H1 (cell line): ENCODE measurements at regions of chr5 and their contacts with region 1.

Region 1: GRCh38 chr5:181173420-181174342 is 26.3 kb downstream of the OR2V2 start:
- DNase-seq: peak; percentile 94 to 98
- H3K4me3 ChIP-seq: peak overlapping the region; percentile 62 to 72 (median 66)
- H3K27ac ChIP-seq: no peak overlapping the region
- H3K4me1 ChIP-seq: no peaks in the 10 kb centered on the region; a peak in 1 of 7 replicates
- H3K27me3 ChIP-seq: peaks cover 6 to 35% (median 25%) of the 10 kb centered on the region in 4 experiments; a peak in 6 of 7 replicates
- CTCF ChIP-seq: peak in 2 of 3 experiments; percentile 2 to 17; a peak in 1 of 4 replicates
- EP300 ChIP-seq: no peak
- POLR2A ChIP-seq: no peak
- RAD21 ChIP-seq: no peak

Region 2: GRCh38 chr5:181127907-181128626 is 45.6 kb before region 1 on chr5:
- CTCF ChIA-PET with region 1: no interaction called
- POLR2A ChIA-PET with region 1: no interaction called
- DNase-seq: no peak
- H3K4me3 ChIP-seq: no peak overlapping the region
- H3K27ac ChIP-seq: no peak overlapping the region
- H3K4me1 ChIP-seq: no peaks in the 10 kb centered on the region; a peak in 1 of 7 replicates
- H3K27me3 ChIP-seq: 0 out of 7 replicates have a peak, but pooled peaks cover 0 to 3% (median 0%) of the 10 kb centered on the region in 4 experiments
- CTCF ChIP-seq: no peak
- EP300 ChIP-seq: no peak
- POLR2A ChIP-seq: no peak
- RAD21 ChIP-seq: no peak

Region 3: DNA sequence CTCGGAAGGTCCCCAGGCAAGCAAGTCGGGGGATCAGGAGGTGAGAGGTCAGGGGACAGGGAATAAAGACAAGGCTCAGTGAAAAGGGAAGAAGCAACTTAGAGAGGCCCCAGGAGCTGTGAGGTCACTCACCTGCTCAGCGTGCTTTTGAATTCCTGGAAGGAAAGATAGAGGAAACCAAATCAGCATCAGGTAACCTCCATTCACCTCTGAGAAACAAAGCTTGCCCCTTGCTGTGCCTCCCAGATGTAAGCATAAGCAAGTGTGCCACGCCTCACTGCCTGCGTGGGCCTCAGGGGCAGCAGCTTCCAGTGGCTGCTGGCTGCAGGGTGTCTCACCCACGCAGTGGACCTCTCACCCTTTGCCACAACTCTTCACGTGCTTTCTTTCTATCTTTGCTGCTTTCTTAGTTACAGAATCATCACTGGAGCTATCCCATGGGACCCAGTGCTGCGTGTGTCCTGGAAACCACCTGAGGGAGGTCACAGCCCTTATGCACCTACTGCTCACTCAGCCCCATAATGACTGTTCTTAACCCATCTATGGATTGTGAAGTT is 25.4 kb after region 1 on chr5:
- CTCF ChIA-PET with region 1: interaction called, 17 read pairs
- POLR2A ChIA-PET with region 1: interaction called, 5 read pairs
- DNase-seq: no peak
- H3K4me3 ChIP-seq: peak overlapping the region in 1 of 4 experiments; percentile 22; a peak in 2 of 8 replicates
- H3K27ac ChIP-seq: no peak overlapping the region
- H3K4me1 ChIP-seq: peaks cover 9 to 36% (median 20%) of the 10 kb centered on the region in 4 experiments
- H3K27me3 ChIP-seq: peaks cover 11 to 60% (median 37%) of the 10 kb centered on the region in 4 experiments
- CTCF ChIP-seq: no peak
- EP300 ChIP-seq: no peak
- POLR2A ChIP-seq: no peak
- RAD21 ChIP-seq: no peak

Region 4: GRCh38 chr5:181207214-181208107 is 33.8 kb after region 1 on chr5:
- CTCF ChIA-PET with region 1: interaction called, 11 read pairs
- POLR2A ChIA-PET with region 1: interaction called, 6 read pairs
- DNase-seq: peak in 1 of 2 experiments; percentile 97
- H3K4me3 ChIP-seq: peak overlapping the region; percentile 59 to 91 (median 86)
- H3K27ac ChIP-seq: no peak overlapping the region
- H3K4me1 ChIP-seq: peaks cover 0 to 13% (median 5%) of the 10 kb centered on the region in 4 experiments; a peak in 5 of 7 replicates
- H3K27me3 ChIP-seq: peaks cover 28 to 41% (median 39%) of the 10 kb centered on the region in 4 experiments
- CTCF ChIP-seq: no peak
- EP300 ChIP-seq: no peak
- POLR2A ChIP-seq: no peak
- RAD21 ChIP-seq: no peak

Region 5: DNA sequence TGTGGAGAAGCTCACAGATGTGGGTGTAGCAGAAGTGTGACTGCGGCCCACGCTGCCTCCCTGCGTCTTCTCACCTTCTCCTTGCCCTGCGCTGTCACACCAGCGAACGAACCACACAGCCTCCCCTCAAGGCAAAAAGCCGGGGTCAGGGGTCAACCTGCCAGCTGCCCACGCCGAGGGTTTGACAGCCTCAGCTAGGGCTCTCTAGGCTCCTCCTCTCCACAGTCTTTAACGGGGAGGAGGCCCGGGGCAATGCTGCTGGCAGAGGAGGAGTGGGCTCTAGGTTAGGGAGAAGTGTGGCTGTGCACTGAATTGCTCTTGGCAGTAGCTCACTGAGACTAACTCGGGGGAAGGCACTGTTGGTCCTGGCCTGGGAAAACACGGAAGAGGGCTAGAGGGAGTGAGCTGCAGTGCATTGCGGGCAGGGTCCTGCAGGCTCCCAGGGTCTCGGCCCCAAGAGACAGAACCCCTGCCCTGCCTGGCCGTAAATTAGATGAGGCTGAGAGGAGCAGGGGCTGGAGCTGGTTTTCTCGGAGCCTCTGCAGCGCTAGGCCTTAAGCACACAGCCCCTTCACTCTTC is 91.5 kb after region 1 on chr5:
- CTCF ChIA-PET with region 1: no interaction called
- POLR2A ChIA-PET with region 1: no interaction called
- DNase-seq: peak in 1 of 2 experiments; percentile 43
- H3K4me3 ChIP-seq: no peak overlapping the region
- H3K27ac ChIP-seq: no peak overlapping the region
- H3K4me1 ChIP-seq: peaks cover 0 to 2% (median 1%) of the 10 kb centered on the region in 4 experiments; a peak in 5 of 7 replicates
- H3K27me3 ChIP-seq: no peaks in the 10 kb centered on the region
- CTCF ChIP-seq: no peak
- EP300 ChIP-seq: no peak
- POLR2A ChIP-seq: no peak
- RAD21 ChIP-seq: no peak